CD8-positive, alpha-beta memory T cell (primary cell): ENCODE measurements at regions of chr15 and their contacts with region 1.

Region 1: GRCh38 chr15:88904624-88905327 is 8.4 kb downstream of the MFGE8 start:
- DNase-seq: peak; percentile 84 to 96 (median 94)
- H3K4me3 ChIP-seq: peak overlapping the region; percentile 33
- H3K4me3 Mint-ChIP-seq: peak overlapping the region; percentile 6 to 55 (median 24)
- H3K27ac ChIP-seq: peak overlapping the region; percentile 21
- H3K27ac Mint-ChIP-seq: peak overlapping the region; percentile 78 to 99 (median 95)
- H3K4me1 ChIP-seq: peaks cover 32% of the 10 kb centered on the region
- H3K4me1 Mint-ChIP-seq: peaks cover 23 to 46% (median 39%) of the 10 kb centered on the region in 3 donors
- H3K27me3 ChIP-seq: no peaks in the 10 kb centered on the region
- H3K27me3 Mint-ChIP-seq: no peaks in the 10 kb centered on the region

Region 2: GRCh38 chr15:88918738-88919137 is 14.0 kb after region 1 on chr15:
- CTCF ChIA-PET with region 1: interaction called, 27 read pairs
- POLR2A ChIA-PET with region 1: no interaction called
- DNase-seq: no peak
- H3K4me3 ChIP-seq: no peak overlapping the region
- H3K4me3 Mint-ChIP-seq: no peak overlapping the region
- H3K27ac ChIP-seq: no peak overlapping the region
- H3K27ac Mint-ChIP-seq: no peak overlapping the region
- H3K4me1 ChIP-seq: no peaks in the 10 kb centered on the region
- H3K4me1 Mint-ChIP-seq: peaks cover 0 to under 1% (median 0%) of the 10 kb centered on the region in 3 donors
- H3K27me3 ChIP-seq: no peaks in the 10 kb centered on the region
- H3K27me3 Mint-ChIP-seq: peaks cover 5 to 44% of the 10 kb centered on the region in 2 donors

Region 3: DNA sequence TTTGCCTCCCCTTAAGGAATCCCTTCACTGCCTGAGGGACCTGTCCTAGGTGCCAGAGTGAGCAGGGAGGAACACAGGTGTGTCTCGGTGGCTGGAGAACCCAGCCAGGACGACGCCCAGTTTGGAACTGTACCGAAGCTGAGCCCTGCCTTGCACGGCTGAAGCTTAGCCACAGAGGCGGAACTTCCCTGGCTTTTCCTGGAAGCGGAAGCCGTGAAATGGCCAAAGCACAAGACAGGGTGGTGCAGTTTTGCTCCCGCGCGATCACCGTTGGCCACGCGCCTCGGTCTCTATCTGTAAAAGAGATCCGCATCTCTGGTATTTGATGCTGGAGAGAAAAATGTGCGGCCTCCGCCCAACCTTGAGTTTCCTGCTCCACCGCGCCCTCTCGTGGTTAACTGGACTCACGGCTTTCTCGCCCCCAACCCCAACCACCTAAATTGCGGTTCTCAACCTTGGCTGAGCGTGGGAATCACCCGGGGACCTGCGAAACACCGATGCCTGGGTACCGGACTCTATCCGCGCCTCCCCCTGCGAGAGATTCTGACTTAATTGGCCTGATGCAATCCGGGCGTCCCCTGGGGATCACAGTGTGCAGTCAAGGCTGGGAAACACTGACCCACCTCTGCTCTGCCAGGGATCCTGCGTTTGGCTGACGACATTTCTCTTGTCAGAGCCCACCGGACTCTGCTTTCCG is 112.7 kb after region 1 on chr15:
- CTCF ChIA-PET with region 1: interaction called, 59 read pairs
- POLR2A ChIA-PET with region 1: interaction called, 3 read pairs
- DNase-seq: peak; percentile 71 to 84 (median 74)
- H3K4me3 ChIP-seq: peak overlapping the region; percentile 24
- H3K4me3 Mint-ChIP-seq: peak overlapping the region; percentile 18 to 84 (median 66)
- H3K27ac ChIP-seq: no peak overlapping the region
- H3K27ac Mint-ChIP-seq: peak overlapping the region; percentile 13 to 70 (median 49)
- H3K4me1 ChIP-seq: peaks cover 14% of the 10 kb centered on the region
- H3K4me1 Mint-ChIP-seq: peaks cover 12 to 15% (median 14%) of the 10 kb centered on the region in 3 donors
- H3K27me3 ChIP-seq: no peaks in the 10 kb centered on the region
- H3K27me3 Mint-ChIP-seq: peaks cover 8 to 35% of the 10 kb centered on the region in 2 donors

Region 4: GRCh38 chr15:89041507-89041906 is 136.7 kb after region 1 on chr15:
- CTCF ChIA-PET with region 1: no interaction called
- POLR2A ChIA-PET with region 1: no interaction called
- DNase-seq: no peak
- H3K4me3 ChIP-seq: no peak overlapping the region
- H3K4me3 Mint-ChIP-seq: no peak overlapping the region
- H3K27ac ChIP-seq: no peak overlapping the region
- H3K27ac Mint-ChIP-seq: no peak overlapping the region
- H3K4me1 ChIP-seq: no peaks in the 10 kb centered on the region
- H3K4me1 Mint-ChIP-seq: peaks cover 0 to 3% (median 0%) of the 10 kb centered on the region in 3 donors
- H3K27me3 ChIP-seq: no peaks in the 10 kb centered on the region
- H3K27me3 Mint-ChIP-seq: peaks cover 4 to 31% of the 10 kb centered on the region in 2 donors

Region 5: GRCh38 chr15:89077750-89078149 is 173.0 kb after region 1 on chr15:
- CTCF ChIA-PET with region 1: no interaction called
- POLR2A ChIA-PET with region 1: no interaction called
- DNase-seq: no peak
- H3K4me3 ChIP-seq: no peak overlapping the region
- H3K4me3 Mint-ChIP-seq: no peak overlapping the region
- H3K27ac ChIP-seq: no peak overlapping the region
- H3K27ac Mint-ChIP-seq: no peak overlapping the region
- H3K4me1 ChIP-seq: no peaks in the 10 kb centered on the region
- H3K4me1 Mint-ChIP-seq: no peaks in the 10 kb centered on the region
- H3K27me3 ChIP-seq: no peaks in the 10 kb centered on the region
- H3K27me3 Mint-ChIP-seq: peaks cover 3 to 15% of the 10 kb centered on the region in 2 donors

Region 6: GRCh38 chr15:89087830-89088604 is 183.2 kb after region 1 on chr15 and contains the start of gene ABHD2:
- CTCF ChIA-PET with region 1: interaction called, 14 read pairs
- POLR2A ChIA-PET with region 1: interaction called, 5 read pairs
- DNase-seq: peak; percentile 94 to 98 (median 97)
- H3K4me3 ChIP-seq: peak within 1 kb of the TSS; percentile 80
- H3K4me3 Mint-ChIP-seq: no peak within 1 kb of the TSS
- H3K27ac ChIP-seq: peak within 1 kb of the TSS; percentile 62
- H3K27ac Mint-ChIP-seq: peak within 1 kb of the TSS; percentile 4 to 97 (median 92)
- H3K4me1 ChIP-seq: peaks cover 33% of the 10 kb centered on the region
- H3K4me1 Mint-ChIP-seq: peaks cover 32 to 37% (median 33%) of the 10 kb centered on the region in 3 donors
- H3K27me3 ChIP-seq: no peaks in the 10 kb centered on the region
- H3K27me3 Mint-ChIP-seq: peaks cover 0 to 1% of the 10 kb centered on the region in 2 donors
- total RNA-seq, gene ABHD2: 68.7 to 79.8 TPM

Region 7: GRCh38 chr15:89177633-89178306 is 273.0 kb after region 1 on chr15:
- CTCF ChIA-PET with region 1: interaction called, 21 read pairs
- POLR2A ChIA-PET with region 1: no interaction called
- DNase-seq: peak; percentile 45 to 70 (median 51)
- H3K4me3 ChIP-seq: no peak overlapping the region
- H3K4me3 Mint-ChIP-seq: no peak overlapping the region
- H3K27ac ChIP-seq: no peak overlapping the region
- H3K27ac Mint-ChIP-seq: peak overlapping the region in 2 of 8 donors; percentile 31 to 58
- H3K4me1 ChIP-seq: no peaks in the 10 kb centered on the region
- H3K4me1 Mint-ChIP-seq: peaks cover 3 to 6% (median 5%) of the 10 kb centered on the region in 3 donors
- H3K27me3 ChIP-seq: no peaks in the 10 kb centered on the region
- H3K27me3 Mint-ChIP-seq: no peaks in the 10 kb centered on the region